Breast epithelium (tissue), 4 donors: ENCODE measurements at regions of chr3 and their contacts with region 1.

Region 1: GRCh38 chr3:169764452-169765274 is at the start of gene TERC:
- DNase-seq: peak; percentile 92 to 94
- H3K4me3 ChIP-seq: peak within 1 kb of the TSS; percentile 64 to 98 (median 87)
- H3K27ac ChIP-seq: peak within 1 kb of the TSS; percentile 96 to 99
- H3K4me1 ChIP-seq: peaks cover 0 to 3% of the 10 kb centered on the region in 2 donors
- H3K27me3 ChIP-seq: no peaks in the 10 kb centered on the region
- CTCF ChIP-seq: peak in 1 of 3 donors; percentile 7
- POLR2A ChIP-seq: peak; percentile 98
- total RNA-seq, gene TERC: 125 to 194 (median 179) TPM

Region 2: GRCh38 chr3:167859610-167860009 is 1905.1 kb before region 1 on chr3:
- intact Hi-C with region 1: loop called (anchors 5 kb)
- DNase-seq: no peak
- H3K4me3 ChIP-seq: no peak overlapping the region
- H3K27ac ChIP-seq: no peak overlapping the region
- H3K4me1 ChIP-seq: no peaks in the 10 kb centered on the region
- H3K27me3 ChIP-seq: no peaks in the 10 kb centered on the region
- CTCF ChIP-seq: no peak
- POLR2A ChIP-seq: no peak

Region 3: GRCh38 chr3:168847291-168847883 is 917.3 kb before region 1 on chr3:
- intact Hi-C with region 1: no loop called
- DNase-seq: no peak
- H3K4me3 ChIP-seq: no peak overlapping the region
- H3K27ac ChIP-seq: no peak overlapping the region
- H3K4me1 ChIP-seq: no peaks in the 10 kb centered on the region
- H3K27me3 ChIP-seq: peaks cover 0 to 22% of the 10 kb centered on the region in 2 donors
- CTCF ChIP-seq: peak in 2 of 3 donors; percentile 36 to 61
- POLR2A ChIP-seq: no peak

Region 4: DNA sequence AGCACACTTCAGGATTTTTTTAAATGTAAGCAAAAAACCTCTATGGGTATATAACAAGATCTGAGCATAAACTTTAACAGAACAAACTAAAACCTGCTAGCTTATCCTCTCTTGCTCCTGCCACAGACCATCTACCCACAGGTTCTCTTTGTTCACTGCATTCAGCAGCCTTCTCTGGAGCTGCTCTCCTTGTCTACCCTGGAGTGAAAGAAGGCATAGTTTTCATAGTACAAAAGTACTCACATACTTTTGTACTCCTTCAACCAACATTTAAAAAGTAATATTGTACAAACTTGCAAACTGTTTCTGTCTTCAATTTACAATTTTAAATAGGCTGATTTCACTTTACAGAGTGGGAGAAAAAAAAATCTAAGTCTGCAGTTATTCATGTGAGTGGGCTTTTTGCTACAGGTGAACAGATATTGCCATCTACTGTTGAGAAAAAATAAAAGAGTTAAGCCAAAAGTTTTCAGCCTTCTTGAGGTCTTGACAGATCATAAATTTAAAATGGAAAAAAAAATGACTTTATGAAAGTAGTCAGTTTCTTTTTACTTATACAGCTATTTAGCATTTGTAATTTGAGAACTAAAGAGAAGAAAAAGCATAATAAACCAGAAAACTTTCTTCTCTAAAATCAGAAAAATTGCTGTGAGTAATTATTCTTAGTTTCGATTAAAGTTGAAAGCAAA is 20.2 kb before region 1 on chr3:
- intact Hi-C with region 1: no loop called
- DNase-seq: no peak
- H3K4me3 ChIP-seq: no peak overlapping the region
- H3K27ac ChIP-seq: no peak overlapping the region
- H3K4me1 ChIP-seq: no peaks in the 10 kb centered on the region
- H3K27me3 ChIP-seq: peaks cover 0 to 16% of the 10 kb centered on the region in 2 donors
- CTCF ChIP-seq: peak in 1 of 3 donors; percentile 32
- POLR2A ChIP-seq: no peak